ENCODE measurements at regions of chr11 and their contacts with region 1.

Region 1: GRCh38 chr11:125592305-125593112 is at the start of gene STT3A:
- DNase-seq: peak; percentile 96 to 99 (median 98)
- ATAC-seq: peak; percentile 91
- H3K4me3 ChIP-seq: peak within 1 kb of the TSS; percentile 90 to 97
- H3K4me3 Mint-ChIP-seq: peak within 1 kb of the TSS; percentile 92
- H3K27ac ChIP-seq: peak within 1 kb of the TSS; percentile 88 to 96
- H3K27ac Mint-ChIP-seq: peak within 1 kb of the TSS; percentile 98
- H3K4me1 ChIP-seq: peaks cover 15% of the 10 kb centered on the region
- H3K4me1 Mint-ChIP-seq: peaks cover 43% of the 10 kb centered on the region
- H3K27me3 ChIP-seq: no peaks in the 10 kb centered on the region
- H3K27me3 Mint-ChIP-seq: no peaks in the 10 kb centered on the region
- CTCF ChIP-seq: no peak
- total RNA-seq, gene STT3A: 45.5 to 46.8 TPM

Region 2: GRCh38 chr11:124622531-124623451 is 969.7 kb before region 1 on chr11 and contains the start of gene TBRG1:
- CTCF ChIA-PET with region 1: no interaction called
- POLR2A ChIA-PET with region 1: no interaction called
- intact Hi-C with region 1: loop called in 1 of 2 experiments (anchors 10 kb)
- DNase-seq: peak; percentile 62 to 95 (median 84)
- ATAC-seq: peak; percentile 97
- H3K4me3 ChIP-seq: peak within 1 kb of the TSS; percentile 94 to 100
- H3K4me3 Mint-ChIP-seq: peak within 1 kb of the TSS; percentile 97
- H3K27ac ChIP-seq: peak within 1 kb of the TSS; percentile 95 to 97
- H3K27ac Mint-ChIP-seq: peak within 1 kb of the TSS; percentile 99
- H3K4me1 ChIP-seq: peaks cover 16% of the 10 kb centered on the region
- H3K4me1 Mint-ChIP-seq: peaks cover 43% of the 10 kb centered on the region
- H3K27me3 ChIP-seq: no peaks in the 10 kb centered on the region
- H3K27me3 Mint-ChIP-seq: peaks cover 6% of the 10 kb centered on the region
- CTCF ChIP-seq: no peak
- total RNA-seq, gene TBRG1: 59.2 to 61.0 TPM

Region 3: DNA sequence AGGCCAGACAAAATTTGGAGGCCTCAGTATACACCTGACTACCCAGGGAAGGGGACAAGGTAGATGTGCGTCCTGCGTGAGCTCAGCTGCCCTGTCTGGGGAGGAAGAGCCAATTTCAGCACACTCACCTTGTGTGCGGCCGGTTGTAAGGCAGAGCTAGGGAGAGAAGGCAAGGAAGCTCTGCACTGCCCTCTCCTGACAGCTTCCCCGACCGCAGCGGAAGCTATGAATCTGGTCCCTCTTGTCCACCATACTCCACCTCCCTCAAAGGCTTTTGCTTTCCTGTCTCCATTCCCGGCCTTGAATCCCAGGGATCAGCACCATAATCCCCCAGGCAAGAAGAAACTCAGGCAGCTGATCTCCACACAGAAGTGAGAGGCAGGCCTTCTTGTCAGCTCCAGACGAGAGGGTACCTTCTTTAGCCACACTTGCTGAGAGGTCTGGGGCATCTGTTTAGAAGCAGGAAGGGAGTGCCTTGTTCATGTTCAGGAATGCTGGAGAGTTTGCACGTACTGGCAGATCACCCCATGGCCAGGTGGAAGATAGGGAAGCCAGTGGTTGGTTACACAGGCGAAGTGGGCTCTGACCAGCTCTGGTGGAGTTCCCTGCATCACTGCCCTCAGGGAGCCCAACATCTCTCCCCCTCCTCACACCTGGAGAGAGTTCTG is 158.9 kb before region 1 on chr11:
- CTCF ChIA-PET with region 1: no interaction called
- POLR2A ChIA-PET with region 1: no interaction called
- intact Hi-C with region 1: no loop called
- DNase-seq: peak in 2 of 9 experiments; percentile 12 to 20
- ATAC-seq: no peak
- H3K4me3 ChIP-seq: no peak overlapping the region
- H3K4me3 Mint-ChIP-seq: no peak overlapping the region
- H3K27ac ChIP-seq: no peak overlapping the region
- H3K27ac Mint-ChIP-seq: no peak overlapping the region
- H3K4me1 ChIP-seq: no peaks in the 10 kb centered on the region
- H3K4me1 Mint-ChIP-seq: peaks cover 8% of the 10 kb centered on the region
- H3K27me3 ChIP-seq: peaks cover 0 to 2% of the 10 kb centered on the region in 2 experiments
- H3K27me3 Mint-ChIP-seq: peaks cover 24% of the 10 kb centered on the region
- CTCF ChIP-seq: no peak

Region 4: GRCh38 chr11:125514336-125515101 is 78.0 kb before region 1 on chr11:
- CTCF ChIA-PET with region 1: no interaction called
- POLR2A ChIA-PET with region 1: interaction called, 6 read pairs
- intact Hi-C with region 1: loop called in 1 of 2 experiments (anchors 1 kb)
- DNase-seq: peak; percentile 27 to 95 (median 53)
- ATAC-seq: peak; percentile 84
- H3K4me3 ChIP-seq: no peak overlapping the region
- H3K4me3 Mint-ChIP-seq: peak overlapping the region; percentile 30
- H3K27ac ChIP-seq: peak overlapping the region; percentile 52 to 88
- H3K27ac Mint-ChIP-seq: peak overlapping the region; percentile 89
- H3K4me1 ChIP-seq: peaks cover 35% of the 10 kb centered on the region
- H3K4me1 Mint-ChIP-seq: peaks cover 37% of the 10 kb centered on the region
- H3K27me3 ChIP-seq: no peaks in the 10 kb centered on the region
- H3K27me3 Mint-ChIP-seq: no peaks in the 10 kb centered on the region
- CTCF ChIP-seq: no peak

Region 5: DNA sequence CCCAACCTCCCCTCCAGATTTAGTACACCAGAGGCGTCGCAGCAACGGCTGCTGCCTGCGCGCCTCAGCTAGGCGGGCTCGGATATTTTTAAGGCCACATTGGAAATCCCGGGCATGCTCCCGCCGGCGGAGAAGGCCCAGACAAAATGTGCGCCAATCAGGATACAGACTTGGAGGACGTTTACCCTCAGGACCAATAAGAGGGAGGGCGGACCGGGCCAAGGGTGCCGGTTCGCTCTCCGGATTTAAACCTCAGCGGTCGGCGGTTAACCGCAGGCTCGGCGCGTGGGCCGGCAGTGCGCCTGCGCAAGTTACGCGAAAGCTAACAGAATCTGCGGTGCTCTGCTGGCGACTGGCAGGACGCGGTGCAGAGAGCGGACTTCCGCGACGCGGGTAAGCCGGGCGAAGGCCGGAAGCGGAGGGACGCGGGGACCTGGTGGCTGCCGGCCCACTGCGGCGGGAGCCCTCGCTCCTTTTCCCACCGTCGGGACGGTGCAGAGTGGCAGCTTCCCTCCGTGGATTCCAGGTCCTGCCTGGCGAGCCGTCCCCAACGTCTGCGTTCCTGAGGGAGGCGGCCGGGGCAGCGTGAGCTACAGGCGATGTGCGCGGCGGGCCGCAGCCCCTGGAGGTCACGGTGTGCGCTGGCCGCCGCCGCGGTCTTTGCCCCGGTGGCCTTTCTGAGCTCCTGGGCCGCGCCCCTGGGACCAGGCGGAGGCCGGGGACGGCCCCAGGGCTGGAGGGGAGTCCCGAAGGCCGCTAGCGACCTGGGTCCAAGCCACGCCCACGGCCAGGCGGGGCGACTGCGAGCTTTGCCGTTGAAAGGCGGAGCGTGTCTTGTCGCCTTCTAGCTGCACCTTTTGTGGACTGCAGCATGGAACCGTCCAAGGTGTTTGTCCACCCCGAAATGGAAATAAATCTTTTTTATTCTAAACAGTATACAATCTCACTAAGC is 295.1 kb after region 1 on chr11 and contains the start of gene HYLS1:
- CTCF ChIA-PET with region 1: no interaction called
- POLR2A ChIA-PET with region 1: interaction called, 5 read pairs
- intact Hi-C with region 1: loop called in 1 of 2 experiments (anchors 1 kb)
- DNase-seq: peak; percentile 87 to 97 (median 94)
- ATAC-seq: peak; percentile 88
- H3K4me3 ChIP-seq: peak within 1 kb of the TSS; percentile 81 to 84
- H3K4me3 Mint-ChIP-seq: peak within 1 kb of the TSS; percentile 88
- H3K27ac ChIP-seq: peak within 1 kb of the TSS; percentile 61 to 87
- H3K27ac Mint-ChIP-seq: peak within 1 kb of the TSS; percentile 87
- H3K4me1 ChIP-seq: peaks cover 10% of the 10 kb centered on the region
- H3K4me1 Mint-ChIP-seq: peaks cover 31% of the 10 kb centered on the region
- H3K27me3 ChIP-seq: no peaks in the 10 kb centered on the region
- H3K27me3 Mint-ChIP-seq: no peaks in the 10 kb centered on the region
- CTCF ChIP-seq: no peak
- total RNA-seq, gene HYLS1: 1.1 to 1.2 TPM

Region 6: GRCh38 chr11:126062679-126063506 is 470.4 kb after region 1 on chr11 and contains the start of gene CDON:
- CTCF ChIA-PET with region 1: no interaction called
- POLR2A ChIA-PET with region 1: no interaction called
- intact Hi-C with region 1: loop called (anchors 1 kb)
- DNase-seq: peak; percentile 78 to 95 (median 89)
- ATAC-seq: peak; percentile 89
- H3K4me3 ChIP-seq: peak within 1 kb of the TSS; percentile 60 to 91
- H3K4me3 Mint-ChIP-seq: peak within 1 kb of the TSS; percentile 91
- H3K27ac ChIP-seq: peak within 1 kb of the TSS; percentile 80 to 90
- H3K27ac Mint-ChIP-seq: peak within 1 kb of the TSS; percentile 95
- H3K4me1 ChIP-seq: peaks cover 13% of the 10 kb centered on the region
- H3K4me1 Mint-ChIP-seq: peaks cover 13% of the 10 kb centered on the region
- H3K27me3 ChIP-seq: no peaks in the 10 kb centered on the region
- H3K27me3 Mint-ChIP-seq: peaks cover 4% of the 10 kb centered on the region
- CTCF ChIP-seq: no peak
- total RNA-seq, gene CDON: 1.00 to 1.1 TPM